GM12878 (cell line): ENCODE measurements at regions of chr3 and their contacts with region 1.

Region 1: GRCh38 chr3:196432137-196432879 is at the start of gene UBXN7:
- DNase-seq: peak; percentile 85
- ATAC-seq: peak; percentile 92
- H3K4me3 ChIP-seq: peak within 1 kb of the TSS; percentile 89
- H3K27ac ChIP-seq: peak within 1 kb of the TSS; percentile 86
- H3K4me1 ChIP-seq: peaks cover 6% of the 10 kb centered on the region; the same call in 1 of the 2 replicates
- H3K27me3 ChIP-seq: no peaks in the 10 kb centered on the region
- CTCF ChIP-seq: no peak
- EP300 ChIP-seq: no peak
- POLR2A ChIP-seq: peak; percentile 92
- RAD21 ChIP-seq: no peak
- polyA plus RNA-seq, gene UBXN7: 4.8 TPM

Region 2: GRCh38 chr3:195147649-195148095 is 1284.6 kb before region 1 on chr3:
- CTCF ChIA-PET with region 1: no interaction called
- POLR2A ChIA-PET with region 1: no interaction called
- RAD21 ChIA-PET with region 1: no interaction called
- SMC1A ChIA-PET with region 1: no interaction called
- in situ Hi-C with region 1: loop called (anchors 25 kb)
- intact Hi-C with region 1: no loop called
- DNase-seq: peak; percentile 91
- ATAC-seq: peak; percentile 83
- H3K4me3 ChIP-seq: peak overlapping the region; percentile 93
- H3K27ac ChIP-seq: peak overlapping the region; percentile 91
- H3K4me1 ChIP-seq: peaks cover 46% of the 10 kb centered on the region
- H3K27me3 ChIP-seq: no peaks in the 10 kb centered on the region
- CTCF ChIP-seq: no peak
- EP300 ChIP-seq: no peak
- POLR2A ChIP-seq: peak; percentile 79
- RAD21 ChIP-seq: no peak

Region 3: DNA sequence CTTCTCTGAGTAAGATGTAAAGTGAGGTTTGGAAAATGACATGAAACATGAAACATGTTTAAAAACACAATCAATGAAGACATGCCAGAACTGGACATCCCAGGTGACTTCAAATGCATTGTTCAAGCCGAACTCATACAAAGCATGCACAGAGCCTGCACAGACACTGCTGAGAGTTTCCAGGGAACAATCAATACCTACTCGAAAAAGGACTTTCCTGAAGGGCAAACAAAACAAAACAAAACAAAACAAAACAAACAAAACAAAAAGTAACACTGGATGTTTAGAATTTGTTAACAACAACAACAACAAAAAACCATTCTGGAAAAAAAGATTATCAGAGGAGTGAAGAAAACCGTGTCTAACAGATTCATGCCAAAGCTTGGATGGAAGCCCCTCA is 83.6 kb before region 1 on chr3:
- CTCF ChIA-PET with region 1: no interaction called
- POLR2A ChIA-PET with region 1: no interaction called
- RAD21 ChIA-PET with region 1: no interaction called
- SMC1A ChIA-PET with region 1: no interaction called
- in situ Hi-C with region 1: no loop called
- intact Hi-C with region 1: no loop called
- DNase-seq: no peak
- ATAC-seq: no peak
- H3K4me3 ChIP-seq: no peak overlapping the region
- H3K27ac ChIP-seq: no peak overlapping the region
- H3K4me1 ChIP-seq: peaks cover 4% of the 10 kb centered on the region; the same call in 1 of the 2 replicates
- H3K27me3 ChIP-seq: no peaks in the 10 kb centered on the region
- CTCF ChIP-seq: no peak
- EP300 ChIP-seq: no peak
- POLR2A ChIP-seq: no peak
- RAD21 ChIP-seq: no peak

Region 4: DNA sequence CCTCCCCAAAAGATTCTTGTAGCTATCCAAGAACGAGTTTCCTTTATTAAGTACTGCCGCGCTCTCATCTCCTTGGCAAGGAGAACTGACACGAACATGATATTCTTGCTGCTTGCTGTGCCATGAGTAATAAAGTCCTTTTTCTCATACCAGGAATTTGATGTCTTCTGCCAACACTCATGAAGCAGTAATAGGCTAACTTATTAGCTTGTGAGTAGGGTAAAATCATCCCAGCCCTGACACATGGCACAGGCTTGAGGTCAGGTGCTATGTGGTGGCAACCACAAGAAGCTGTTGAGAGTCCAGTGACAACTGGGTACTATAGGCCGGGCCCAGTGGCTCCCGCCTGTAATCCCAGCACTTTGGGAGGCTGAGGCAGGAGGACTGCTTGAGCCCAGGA is 22.6 kb after region 1 on chr3:
- CTCF ChIA-PET with region 1: interaction called, 3 read pairs
- POLR2A ChIA-PET with region 1: no interaction called
- RAD21 ChIA-PET with region 1: interaction called, 3 read pairs
- SMC1A ChIA-PET with region 1: interaction called, 6 read pairs
- in situ Hi-C with region 1: no loop called
- intact Hi-C with region 1: loop called (anchors 1 kb)
- DNase-seq: no peak
- ATAC-seq: peak; percentile 35; the same call in 1 of the 3 replicates
- H3K4me3 ChIP-seq: no peak overlapping the region
- H3K27ac ChIP-seq: no peak overlapping the region
- H3K4me1 ChIP-seq: peaks cover 4% of the 10 kb centered on the region
- H3K27me3 ChIP-seq: no peaks in the 10 kb centered on the region
- CTCF ChIP-seq: no peak
- EP300 ChIP-seq: no peak
- POLR2A ChIP-seq: no peak
- RAD21 ChIP-seq: no peak

Region 5: DNA sequence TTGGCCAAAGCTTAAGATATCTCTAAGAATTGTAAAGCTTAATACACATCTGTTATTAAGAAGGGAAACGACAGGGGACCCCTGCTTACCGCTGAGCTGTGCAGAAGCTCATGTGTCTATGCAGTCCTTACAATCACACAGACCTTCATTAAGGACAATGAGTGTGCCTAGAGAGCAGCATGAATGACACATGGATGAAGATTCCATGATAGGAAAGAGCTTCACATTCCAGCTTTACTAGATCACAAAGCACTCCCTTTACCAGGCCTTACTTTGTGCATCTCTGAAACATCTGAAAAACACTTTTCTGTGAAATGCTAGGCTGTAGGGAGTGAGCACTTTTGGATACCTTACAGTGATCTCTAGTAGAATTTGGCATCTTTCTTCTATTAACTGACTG is 39.2 kb after region 1 on chr3:
- CTCF ChIA-PET with region 1: no interaction called
- POLR2A ChIA-PET with region 1: interaction called, 3 read pairs
- RAD21 ChIA-PET with region 1: no interaction called
- SMC1A ChIA-PET with region 1: interaction called, 11 read pairs
- in situ Hi-C with region 1: no loop called
- intact Hi-C with region 1: no loop called
- DNase-seq: no peak
- ATAC-seq: no peak
- H3K4me3 ChIP-seq: no peak overlapping the region
- H3K27ac ChIP-seq: no peak overlapping the region
- H3K4me1 ChIP-seq: no peaks in the 10 kb centered on the region
- H3K27me3 ChIP-seq: no peaks in the 10 kb centered on the region
- CTCF ChIP-seq: no peak
- EP300 ChIP-seq: no peak
- POLR2A ChIP-seq: no peak
- RAD21 ChIP-seq: no peak